ENCODE measurements at regions of chr2 and their contacts with region 1.

Region 1: GRCh38 chr2:191927319-191927867 is 80.5 kb upstream of the CAVIN2 start:
- DNase-seq: peak; percentile 99
- H3K4me3 ChIP-seq: peak overlapping the region in 1 of 3 experiments; percentile 5
- H3K27ac ChIP-seq: peak overlapping the region; percentile 84
- H3K4me1 ChIP-seq: peaks cover 48% of the 10 kb centered on the region
- H3K27me3 ChIP-seq: no peaks in the 10 kb centered on the region
- CTCF ChIP-seq: no peak
- POLR2A ChIP-seq: peak; percentile 65

Region 2: DNA sequence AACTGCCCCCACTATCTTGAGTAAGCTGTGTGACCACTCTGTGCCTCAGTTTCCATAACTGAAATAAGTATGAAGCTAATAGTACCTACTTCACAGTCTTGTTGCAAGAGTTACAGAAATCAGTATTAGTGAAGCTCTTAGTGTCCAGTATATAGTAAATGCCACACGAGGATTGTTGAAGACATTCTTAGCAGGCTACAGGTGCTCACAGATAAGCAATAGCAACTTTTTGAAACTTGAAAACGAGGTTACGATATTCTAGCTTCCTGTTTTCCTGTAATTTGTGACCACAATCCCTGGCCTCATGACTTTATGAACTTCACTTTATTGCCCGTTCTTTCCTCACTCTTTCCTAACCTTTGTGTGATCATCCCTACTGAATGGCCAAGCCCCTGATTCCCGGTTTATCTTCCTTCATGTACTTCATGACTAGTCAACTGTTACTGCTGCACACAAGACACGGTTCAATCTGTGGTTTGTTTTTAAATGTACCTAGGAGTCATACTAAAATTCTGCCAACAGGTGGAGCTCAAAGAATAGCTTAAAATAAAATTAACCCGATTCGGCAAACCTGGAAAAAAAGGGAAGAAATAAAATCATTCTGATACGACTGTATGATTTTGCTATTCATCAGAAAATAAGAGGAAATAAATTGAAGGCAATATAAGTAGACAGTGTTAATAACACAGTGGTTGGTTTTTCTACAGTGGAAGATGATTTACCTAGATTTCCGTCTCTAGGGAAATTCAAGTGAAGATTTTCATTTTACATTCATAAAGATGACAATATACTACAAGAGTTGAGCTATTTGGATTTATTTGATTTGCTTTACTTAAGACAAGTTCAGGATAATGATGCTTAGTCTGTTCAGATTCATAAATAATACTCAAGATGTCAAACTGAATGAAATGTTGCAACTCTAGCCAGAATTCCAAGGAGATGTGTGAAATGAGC is 875.3 kb before region 1 on chr2:
- CTCF ChIA-PET with region 1: no interaction called
- POLR2A ChIA-PET with region 1: no interaction called
- dilution Hi-C with region 1: no loop called
- intact Hi-C with region 1: no loop called
- DNase-seq: peak; percentile 75
- H3K4me3 ChIP-seq: no peak overlapping the region
- H3K27ac ChIP-seq: no peak overlapping the region
- H3K4me1 ChIP-seq: peaks cover 5% of the 10 kb centered on the region
- H3K27me3 ChIP-seq: peaks cover 4 to 8% of the 10 kb centered on the region in 2 experiments
- CTCF ChIP-seq: peak; percentile 27 to 38
- POLR2A ChIP-seq: no peak

Region 3: GRCh38 chr2:191566344-191566743 is 361.0 kb before region 1 on chr2:
- CTCF ChIA-PET with region 1: no interaction called
- POLR2A ChIA-PET with region 1: no interaction called
- dilution Hi-C with region 1: no loop called
- intact Hi-C with region 1: no loop called
- DNase-seq: peak; percentile 54
- H3K4me3 ChIP-seq: no peak overlapping the region
- H3K27ac ChIP-seq: no peak overlapping the region
- H3K4me1 ChIP-seq: peaks cover 3% of the 10 kb centered on the region
- H3K27me3 ChIP-seq: peaks cover 6 to 16% of the 10 kb centered on the region in 2 experiments
- CTCF ChIP-seq: peak; percentile 64 to 82
- POLR2A ChIP-seq: no peak

Region 4: DNA sequence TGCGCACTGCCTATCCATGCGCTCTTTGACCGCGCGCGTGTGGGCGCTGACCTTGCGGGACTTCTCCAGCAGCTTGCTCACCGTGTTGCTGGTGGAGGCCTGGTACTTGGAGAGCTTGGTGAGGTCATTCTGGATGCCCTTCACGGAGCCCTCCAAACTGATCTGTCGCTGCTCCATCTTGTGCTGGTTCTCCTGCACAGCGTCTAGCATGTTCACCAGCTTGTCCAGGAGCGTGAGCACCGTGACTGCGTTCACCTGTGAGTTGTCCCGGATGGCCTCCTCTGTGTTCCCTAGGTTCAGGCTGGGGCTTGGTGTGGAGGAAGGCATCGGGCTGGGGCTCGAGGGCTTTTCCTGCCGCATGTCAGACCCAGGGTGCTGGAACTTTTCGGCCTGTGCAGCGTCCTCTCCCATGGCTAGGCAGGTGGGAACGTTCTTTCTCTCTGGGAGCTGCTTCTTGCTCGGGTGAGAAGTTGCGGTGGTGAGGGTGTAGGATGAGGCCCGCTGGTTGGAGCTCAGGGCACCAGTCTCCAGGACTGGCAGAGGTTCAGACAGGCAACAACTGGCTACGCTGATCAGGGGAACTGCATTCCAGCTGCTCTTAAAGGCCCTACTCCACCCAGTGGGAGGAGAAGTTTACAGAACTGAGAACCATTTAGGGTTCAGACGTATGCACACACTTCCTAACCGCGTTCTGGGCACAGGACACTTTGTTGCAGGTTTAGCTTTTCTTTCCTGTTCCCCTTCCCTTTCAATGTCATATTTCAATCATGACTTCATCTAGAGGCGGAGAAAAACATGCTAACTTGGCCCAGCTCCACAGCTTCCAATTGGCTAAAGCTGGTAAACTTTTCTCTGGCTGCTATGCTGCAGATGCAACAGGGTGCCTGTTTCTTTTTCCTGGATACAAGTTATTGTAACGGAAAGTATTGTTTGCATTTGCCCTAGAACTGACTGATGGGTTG is 80.6 kb before region 1 on chr2 and contains the start of gene CAVIN2:
- CTCF ChIA-PET with region 1: interaction called, 10 read pairs
- POLR2A ChIA-PET with region 1: interaction called, 7 read pairs
- dilution Hi-C with region 1: no loop called
- intact Hi-C with region 1: loop called (anchors 1 kb)
- DNase-seq: peak; percentile 100
- H3K4me3 ChIP-seq: peak within 1 kb of the TSS; percentile 82 to 99 (median 95)
- H3K27ac ChIP-seq: peak within 1 kb of the TSS; percentile 76
- H3K4me1 ChIP-seq: peaks cover 21% of the 10 kb centered on the region
- H3K27me3 ChIP-seq: no peaks in the 10 kb centered on the region
- CTCF ChIP-seq: peak in 1 of 2 donors; percentile 17
- POLR2A ChIP-seq: peak; percentile 98
- total RNA-seq, gene CAVIN2: 171 and 202 TPM in 2 replicates

Region 5: GRCh38 chr2:191869178-191869577 is 58.2 kb before region 1 on chr2:
- CTCF ChIA-PET with region 1: interaction called, 11 read pairs
- POLR2A ChIA-PET with region 1: interaction called, 3 read pairs
- dilution Hi-C with region 1: no loop called
- intact Hi-C with region 1: loop called (anchors 1 kb)
- DNase-seq: peak; percentile 65
- H3K4me3 ChIP-seq: no peak overlapping the region
- H3K27ac ChIP-seq: no peak overlapping the region
- H3K4me1 ChIP-seq: peaks cover 39% of the 10 kb centered on the region
- H3K27me3 ChIP-seq: no peaks in the 10 kb centered on the region
- CTCF ChIP-seq: peak; percentile 25 to 37
- POLR2A ChIP-seq: no peak

Region 6: DNA sequence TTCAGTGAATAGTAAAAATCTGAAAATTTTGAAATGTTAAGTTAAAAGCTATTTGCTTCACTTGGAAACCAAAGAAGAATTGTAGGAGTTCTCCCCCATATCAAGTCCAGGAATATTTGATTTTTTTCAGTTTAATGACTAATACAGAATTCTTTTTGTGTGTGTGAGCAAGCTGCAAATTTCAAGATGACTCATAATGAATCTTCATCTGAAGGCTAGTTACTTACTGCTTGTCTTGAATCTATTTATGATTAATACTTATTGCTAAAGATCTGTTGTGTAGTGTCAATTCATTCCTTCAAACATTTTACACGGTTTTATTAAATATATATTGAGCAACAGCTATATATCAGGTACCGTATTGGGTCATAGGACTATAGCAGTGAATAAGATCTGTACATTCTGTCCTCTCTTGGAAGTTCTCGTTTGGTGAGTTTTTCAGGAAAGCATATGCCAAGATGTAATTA is 32.7 kb before region 1 on chr2:
- CTCF ChIA-PET with region 1: interaction called, 6 read pairs
- POLR2A ChIA-PET with region 1: no interaction called
- dilution Hi-C with region 1: no loop called
- intact Hi-C with region 1: loop called (anchors 1 kb)
- DNase-seq: peak; percentile 61
- H3K4me3 ChIP-seq: no peak overlapping the region
- H3K27ac ChIP-seq: peak overlapping the region; percentile 28
- H3K4me1 ChIP-seq: peaks cover 27% of the 10 kb centered on the region
- H3K27me3 ChIP-seq: no peaks in the 10 kb centered on the region
- CTCF ChIP-seq: no peak
- POLR2A ChIP-seq: no peak

Region 7: DNA sequence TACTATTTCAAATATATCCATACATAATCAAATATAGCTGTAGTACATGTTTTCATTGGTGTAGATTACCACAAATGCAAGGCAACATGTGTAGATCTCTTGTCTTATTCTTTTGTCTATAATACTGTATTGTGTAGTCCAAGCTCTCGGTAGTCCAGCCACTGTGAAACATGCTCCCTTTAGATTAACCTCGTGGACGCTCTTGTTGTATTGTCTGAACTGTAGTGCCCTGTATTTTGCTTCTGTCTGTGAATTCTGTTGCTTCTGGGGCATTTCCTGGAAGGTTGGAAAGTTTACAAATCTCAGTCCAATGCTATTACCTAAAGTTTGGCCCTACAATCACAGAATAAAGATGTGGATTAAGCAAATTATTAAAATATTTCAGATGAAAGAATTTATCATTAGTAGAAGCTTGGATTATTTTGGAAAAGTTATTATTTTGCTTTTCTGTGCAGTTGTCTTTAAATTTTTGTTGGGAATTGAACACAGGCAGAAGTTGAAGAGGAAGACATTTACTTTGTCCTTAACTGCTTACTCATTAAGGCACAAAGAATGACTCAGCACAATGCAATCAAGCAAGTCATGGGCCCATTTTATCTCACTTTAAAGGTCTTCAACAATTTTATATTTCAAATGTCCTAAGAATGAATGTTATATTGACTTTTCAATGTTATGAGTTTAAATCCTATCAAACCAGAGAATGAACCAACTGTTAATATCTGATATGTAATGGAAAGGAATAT is 22.9 kb after region 1 on chr2:
- CTCF ChIA-PET with region 1: interaction called, 3 read pairs
- POLR2A ChIA-PET with region 1: no interaction called
- dilution Hi-C with region 1: no loop called
- intact Hi-C with region 1: loop called (anchors 1 kb)
- DNase-seq: peak; percentile 80
- H3K4me3 ChIP-seq: no peak overlapping the region
- H3K27ac ChIP-seq: peak overlapping the region; percentile 70
- H3K4me1 ChIP-seq: peaks cover 6% of the 10 kb centered on the region
- H3K27me3 ChIP-seq: no peaks in the 10 kb centered on the region
- CTCF ChIP-seq: no peak
- POLR2A ChIP-seq: no peak

Region 8: GRCh38 chr2:192194866-192195547 is 267.6 kb after region 1 on chr2 and contains the start of gene TMEFF2:
- CTCF ChIA-PET with region 1: no interaction called
- POLR2A ChIA-PET with region 1: no interaction called
- dilution Hi-C with region 1: no loop called
- intact Hi-C with region 1: no loop called
- DNase-seq: peak; percentile 61
- H3K4me3 ChIP-seq: peak within 1 kb of the TSS; percentile 38 to 75 (median 43)
- H3K27ac ChIP-seq: no peak within 1 kb of the TSS
- H3K4me1 ChIP-seq: peaks cover 27% of the 10 kb centered on the region
- H3K27me3 ChIP-seq: peaks cover 48 to 89% of the 10 kb centered on the region in 2 experiments
- CTCF ChIP-seq: peak; percentile 24 to 32
- POLR2A ChIP-seq: no peak
- total RNA-seq, gene TMEFF2: 0.12 and 0.20 TPM in 2 replicates

Measured in endothelial cell of umbilical vein (primary cell).